Calu3 (cell line): ENCODE measurements at regions of chr2 and their contacts with region 1.

Region 1: GRCh38 chr2:162890690-162891311 is 52.2 kb upstream of the KCNH7 start:
- DNase-seq: peak; percentile 61
- H3K4me3 Mint-ChIP-seq: peak overlapping the region; percentile 32
- H3K27ac Mint-ChIP-seq: peak overlapping the region; percentile 39
- H3K4me1 Mint-ChIP-seq: no peaks in the 10 kb centered on the region
- H3K27me3 Mint-ChIP-seq: no peaks in the 10 kb centered on the region
- CTCF ChIP-seq: peak; percentile 52

Region 2: GRCh38 chr2:162524192-162524591 is 366.6 kb before region 1 on chr2:
- CTCF ChIA-PET with region 1: no interaction called
- intact Hi-C with region 1: loop called (anchors 5 kb)
- DNase-seq: peak; percentile 55
- H3K4me3 Mint-ChIP-seq: no peak overlapping the region
- H3K27ac Mint-ChIP-seq: no peak overlapping the region
- H3K4me1 Mint-ChIP-seq: peaks cover 9% of the 10 kb centered on the region
- H3K27me3 Mint-ChIP-seq: no peaks in the 10 kb centered on the region
- CTCF ChIP-seq: no peak

Region 3: GRCh38 chr2:162821166-162821565 is 69.6 kb before region 1 on chr2:
- CTCF ChIA-PET with region 1: no interaction called
- intact Hi-C with region 1: no loop called
- DNase-seq: no peak
- H3K4me3 Mint-ChIP-seq: no peak overlapping the region
- H3K27ac Mint-ChIP-seq: peak overlapping the region; percentile 33
- H3K4me1 Mint-ChIP-seq: peaks cover 35% of the 10 kb centered on the region
- H3K27me3 Mint-ChIP-seq: no peaks in the 10 kb centered on the region
- CTCF ChIP-seq: no peak

Region 4: GRCh38 chr2:162974771-162975170 is 84.0 kb after region 1 on chr2:
- CTCF ChIA-PET with region 1: no interaction called
- intact Hi-C with region 1: loop called (anchors 5 kb)
- DNase-seq: no peak
- H3K4me3 Mint-ChIP-seq: no peak overlapping the region
- H3K27ac Mint-ChIP-seq: no peak overlapping the region
- H3K4me1 Mint-ChIP-seq: no peaks in the 10 kb centered on the region
- H3K27me3 Mint-ChIP-seq: no peaks in the 10 kb centered on the region
- CTCF ChIP-seq: no peak